HepG2 (cell line): ENCODE measurements at regions of chr11 and their contacts with region 1.

Region 1: DNA sequence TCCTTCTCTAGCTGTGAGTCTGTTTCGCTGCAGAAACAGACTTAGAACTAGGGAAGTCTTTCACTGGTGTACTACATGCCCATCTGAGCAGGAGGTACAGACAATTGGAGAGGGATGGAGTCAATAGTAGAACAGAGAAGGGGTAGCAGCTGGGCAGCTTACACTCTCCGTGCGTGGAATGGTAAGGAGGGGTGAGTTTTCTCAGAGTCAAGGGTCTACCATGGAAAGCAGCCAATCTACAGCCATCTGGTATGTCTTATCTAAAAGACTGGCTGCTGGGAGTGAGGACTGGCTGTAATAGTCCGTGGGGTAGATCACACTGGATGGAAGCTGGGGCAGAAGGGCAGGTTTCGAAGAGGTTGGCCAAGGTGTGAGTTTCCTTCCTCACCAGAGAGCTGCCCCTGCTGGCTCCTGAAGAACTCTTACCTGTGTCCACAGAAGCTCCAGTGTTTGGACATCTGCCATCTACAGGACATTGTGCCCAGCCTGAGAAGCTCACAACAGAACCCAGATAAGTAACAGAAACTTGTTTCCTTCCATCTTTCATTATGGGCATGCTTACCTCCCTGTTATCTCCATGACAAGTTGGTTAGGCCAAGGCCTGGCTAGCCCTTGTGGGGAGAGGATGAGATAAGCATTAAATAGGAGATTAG is 137.4 kb upstream of the TENM4 start:
- DNase-seq: no peak
- ATAC-seq: no peak
- H3K4me3 ChIP-seq: no peak overlapping the region
- H3K27ac ChIP-seq: no peak overlapping the region
- H3K4me1 ChIP-seq: no peaks in the 10 kb centered on the region
- H3K27me3 ChIP-seq: no peaks in the 10 kb centered on the region
- CTCF ChIP-seq: no peak
- EP300 ChIP-seq: no peak
- POLR2A ChIP-seq: no peak
- RAD21 ChIP-seq: no peak

Region 2: GRCh38 chr11:78914503-78914902 is 663.7 kb before region 1 on chr11:
- CTCF ChIA-PET with region 1: no interaction called
- POLR2A ChIA-PET with region 1: no interaction called
- in situ Hi-C with region 1: no loop called
- intact Hi-C with region 1: loop called (anchors 5 kb)
- DNase-seq: no peak
- ATAC-seq: no peak
- H3K4me3 ChIP-seq: no peak overlapping the region
- H3K27ac ChIP-seq: no peak overlapping the region
- H3K4me1 ChIP-seq: no peaks in the 10 kb centered on the region
- H3K27me3 ChIP-seq: peaks cover 0 to 7% of the 10 kb centered on the region in 2 experiments; a peak in 3 of 5 replicates
- CTCF ChIP-seq: no peak
- EP300 ChIP-seq: no peak
- POLR2A ChIP-seq: no peak
- RAD21 ChIP-seq: no peak

Region 3: GRCh38 chr11:79493555-79494171 is 84.6 kb before region 1 on chr11:
- CTCF ChIA-PET with region 1: no interaction called
- POLR2A ChIA-PET with region 1: no interaction called
- in situ Hi-C with region 1: no loop called
- intact Hi-C with region 1: no loop called
- DNase-seq: peak; percentile 47
- ATAC-seq: peak; percentile 98
- H3K4me3 ChIP-seq: no peak overlapping the region
- H3K27ac ChIP-seq: no peak overlapping the region
- H3K4me1 ChIP-seq: no peaks in the 10 kb centered on the region
- H3K27me3 ChIP-seq: no peaks in the 10 kb centered on the region
- CTCF ChIP-seq: peak; percentile 87
- EP300 ChIP-seq: no peak
- POLR2A ChIP-seq: no peak
- RAD21 ChIP-seq: 0 out of 2 replicates have a peak, but pooled peaks have one; percentile 15